ENCODE measurements at regions of chr9 and their contacts with region 1.

Region 1: DNA sequence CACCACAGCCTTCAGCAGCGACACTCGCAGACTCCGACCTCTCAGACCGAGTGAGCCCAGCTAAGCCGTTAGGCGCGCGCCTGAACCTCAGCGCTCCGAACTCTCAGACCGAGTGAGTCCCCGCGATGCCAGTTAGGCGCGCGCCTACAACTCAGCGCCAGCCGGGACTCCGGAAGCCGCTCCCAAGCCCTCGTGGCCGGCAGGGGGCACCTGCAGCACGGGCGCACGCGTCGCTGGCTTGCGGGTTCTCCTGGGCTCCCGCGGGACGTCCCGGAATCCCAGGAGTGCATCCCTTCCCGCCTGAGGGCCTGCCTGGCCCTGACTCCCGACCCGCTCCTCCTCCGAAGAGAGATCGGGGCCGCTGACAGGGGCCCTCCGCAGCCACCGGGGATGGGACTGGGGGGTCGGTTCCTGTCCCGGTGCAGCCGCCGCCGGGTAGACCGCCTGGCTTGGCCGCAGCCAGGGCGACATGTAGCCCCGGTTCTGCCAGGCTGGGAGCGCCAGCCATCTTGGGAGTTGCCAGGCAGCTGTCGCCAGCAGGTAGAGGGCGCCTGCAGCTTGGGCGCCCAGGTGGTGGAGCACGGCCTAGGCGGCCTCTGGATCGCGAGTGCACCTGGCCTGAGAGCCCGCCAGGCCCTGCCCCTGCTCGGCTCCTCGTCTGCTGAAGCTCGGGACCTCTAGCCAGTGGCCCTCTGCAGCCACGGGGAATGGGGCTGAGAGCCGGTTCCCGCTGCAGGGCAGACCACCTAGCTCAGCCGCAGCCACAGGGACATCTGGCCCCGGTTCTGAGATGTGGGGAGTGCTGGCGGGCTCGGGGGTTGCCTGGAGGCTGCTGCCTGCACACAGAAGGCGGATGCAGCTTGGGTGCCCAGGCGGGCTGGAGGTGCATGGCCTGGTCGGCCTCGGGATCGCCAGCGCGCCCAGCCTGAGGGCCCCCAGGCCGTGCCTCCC is at the start of gene ANKRD18A:
- DNase-seq: peak; percentile 67 to 81 (median 73)
- H3K4me3 ChIP-seq: peak within 1 kb of the TSS; percentile 42 to 77
- H3K4me3 Mint-ChIP-seq: peak within 1 kb of the TSS; percentile 87 to 97 (median 91)
- H3K27ac ChIP-seq: peak within 1 kb of the TSS; percentile 50
- H3K27ac Mint-ChIP-seq: peak within 1 kb of the TSS; percentile 75 to 90 (median 82)
- H3K4me1 ChIP-seq: peaks cover 13% of the 10 kb centered on the region
- H3K4me1 Mint-ChIP-seq: peaks cover 8 to 20% (median 12%) of the 10 kb centered on the region in 4 donors
- H3K27me3 ChIP-seq: peaks cover 3% of the 10 kb centered on the region
- H3K27me3 Mint-ChIP-seq: peaks cover 2 to 6% of the 10 kb centered on the region in 2 donors
- total RNA-seq, gene ANKRD18A: 9.7 to 14.3 TPM

Region 2: DNA sequence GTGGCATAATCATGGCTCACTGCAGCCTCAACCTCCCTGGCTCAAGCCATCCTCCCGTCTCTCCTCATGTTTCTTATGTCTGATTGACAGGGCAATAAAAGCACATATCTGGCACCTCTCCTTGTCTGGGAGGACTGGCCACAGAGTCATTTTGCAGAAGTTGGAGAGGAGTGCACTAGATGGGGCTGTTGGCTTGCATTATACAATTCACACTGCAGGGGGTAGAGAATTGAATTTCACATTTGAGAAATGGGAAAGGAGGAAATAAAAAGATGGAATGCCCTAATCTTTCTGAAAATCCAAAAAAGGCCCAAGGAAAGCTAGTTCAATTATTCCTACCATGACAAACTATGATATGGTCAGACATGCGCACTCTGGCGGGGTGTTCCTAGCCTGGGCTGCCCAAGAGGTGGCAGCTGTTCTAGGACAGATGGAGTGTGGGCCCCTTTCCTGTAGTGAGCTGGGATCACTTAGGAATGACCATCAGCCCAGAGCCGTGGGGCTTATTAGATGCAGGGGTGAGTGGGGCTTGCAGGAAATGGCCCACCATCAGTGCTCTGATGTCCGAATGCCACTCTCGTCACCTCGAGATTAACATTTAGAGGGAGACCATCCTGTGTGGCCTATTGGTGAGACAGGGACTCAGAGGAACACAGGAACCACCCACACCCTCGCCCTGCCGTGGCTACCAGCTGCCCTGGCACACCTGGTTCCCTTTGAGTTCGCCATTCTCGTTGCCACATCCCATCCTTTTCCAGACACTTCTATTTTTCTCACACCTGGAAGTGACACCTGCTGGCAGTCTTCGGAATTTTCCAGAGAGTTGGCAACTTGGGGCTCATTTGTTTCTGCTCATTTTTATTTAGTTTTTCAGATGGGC is 21.5 kb after region 1 on chr9:
- CTCF ChIA-PET with region 1: interaction called, 5 read pairs
- POLR2A ChIA-PET with region 1: no interaction called
- intact Hi-C with region 1: loop called (anchors 2 kb)
- DNase-seq: peak in 2 of 5 donors; percentile 6 to 8
- H3K4me3 ChIP-seq: no peak overlapping the region
- H3K4me3 Mint-ChIP-seq: no peak overlapping the region
- H3K27ac ChIP-seq: no peak overlapping the region
- H3K27ac Mint-ChIP-seq: no peak overlapping the region
- H3K4me1 ChIP-seq: no peaks in the 10 kb centered on the region
- H3K4me1 Mint-ChIP-seq: no peaks in the 10 kb centered on the region
- H3K27me3 ChIP-seq: no peaks in the 10 kb centered on the region
- H3K27me3 Mint-ChIP-seq: peaks cover 2 to 7% of the 10 kb centered on the region in 2 donors

Region 3: DNA sequence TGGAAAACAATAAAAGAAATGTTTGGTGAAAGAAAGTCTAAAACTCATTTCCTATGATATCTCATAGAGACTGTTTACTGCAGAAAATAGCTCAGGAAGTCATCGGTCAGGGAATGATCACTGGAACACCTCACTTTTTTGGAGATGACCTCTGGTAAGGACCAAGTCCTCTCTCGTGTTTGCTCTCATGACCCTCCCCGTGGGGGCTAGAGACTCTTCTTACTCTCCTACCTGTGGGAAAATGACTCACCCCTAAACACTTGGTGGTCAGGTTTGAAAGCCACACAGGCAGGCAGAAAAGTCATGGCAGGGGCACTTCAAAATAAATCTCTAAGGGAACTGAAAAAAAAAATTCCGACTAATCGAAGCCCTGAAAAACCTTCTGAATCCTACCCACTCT is 51.0 kb after region 1 on chr9:
- CTCF ChIA-PET with region 1: interaction called, 4 read pairs
- POLR2A ChIA-PET with region 1: no interaction called
- intact Hi-C with region 1: loop called (anchors 2 kb)
- DNase-seq: no peak
- H3K4me3 ChIP-seq: no peak overlapping the region
- H3K4me3 Mint-ChIP-seq: peak overlapping the region in 1 of 8 donors; percentile 17
- H3K27ac ChIP-seq: no peak overlapping the region
- H3K27ac Mint-ChIP-seq: peak overlapping the region in 1 of 7 donors; percentile 37
- H3K4me1 ChIP-seq: no peaks in the 10 kb centered on the region
- H3K4me1 Mint-ChIP-seq: peaks cover 1 to 8% (median 6%) of the 10 kb centered on the region in 4 donors
- H3K27me3 ChIP-seq: no peaks in the 10 kb centered on the region
- H3K27me3 Mint-ChIP-seq: peaks cover 3 to 5% of the 10 kb centered on the region in 2 donors

Measured in CD4-positive, alpha-beta memory T cell (primary cell).